PC-9 (cell line): ENCODE measurements at regions of chr12 and their contacts with region 1.

Region 1: GRCh38 chr12:76455582-76456345 is 103.8 kb downstream of the OSBPL8 start:
- DNase-seq: peak; percentile 26 to 91
- H3K4me3 ChIP-seq: no peak overlapping the region
- H3K27ac ChIP-seq: peak overlapping the region; percentile 78
- H3K4me1 ChIP-seq: peaks cover 8% of the 10 kb centered on the region
- H3K27me3 ChIP-seq: no peaks in the 10 kb centered on the region
- CTCF ChIP-seq: peak; percentile 77

Region 2: GRCh38 chr12:75390899-75391538 is 1064.7 kb before region 1 on chr12 and contains the start of gene GLIPR1L2:
- CTCF ChIA-PET with region 1: no interaction called
- POLR2A ChIA-PET with region 1: no interaction called
- intact Hi-C with region 1: loop called (anchors 5 kb)
- DNase-seq: peak; percentile 89 to 95
- H3K4me3 ChIP-seq: peak within 1 kb of the TSS; percentile 69
- H3K27ac ChIP-seq: peak within 1 kb of the TSS; percentile 56
- H3K4me1 ChIP-seq: peaks cover 21% of the 10 kb centered on the region
- H3K27me3 ChIP-seq: no peaks in the 10 kb centered on the region
- CTCF ChIP-seq: peak; percentile 88
- total RNA-seq, gene GLIPR1L2: 0.30 TPM in 1 of 2 replicates, not detected in the other

Region 3: DNA sequence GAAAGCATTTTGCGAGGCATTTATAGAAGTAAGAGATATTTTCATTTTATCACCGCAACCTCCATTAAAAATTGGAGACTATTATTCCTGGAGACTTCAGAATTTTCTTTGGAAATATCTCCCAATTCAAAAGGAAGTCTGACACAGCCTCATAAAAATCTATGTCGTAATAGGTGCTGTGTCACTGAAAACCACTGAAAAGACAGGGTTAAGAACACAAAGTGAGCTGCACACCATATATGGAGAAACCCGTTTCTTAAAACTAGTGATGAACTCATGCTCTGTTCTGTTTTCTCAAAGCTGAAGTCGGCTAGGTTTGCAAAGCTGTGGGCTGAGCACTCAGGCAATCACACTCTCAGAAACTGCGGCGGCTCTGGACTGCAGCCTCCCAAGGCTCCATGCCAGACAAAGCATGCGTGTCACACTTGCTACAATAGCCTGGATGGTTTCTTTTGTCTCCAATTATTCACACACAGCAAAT is 975.3 kb before region 1 on chr12 and contains the start of gene GLIPR1:
- CTCF ChIA-PET with region 1: no interaction called
- POLR2A ChIA-PET with region 1: interaction called, 4 read pairs
- intact Hi-C with region 1: loop called (anchors 1 kb)
- DNase-seq: peak; percentile 46 to 69
- H3K4me3 ChIP-seq: no peak within 1 kb of the TSS
- H3K27ac ChIP-seq: no peak within 1 kb of the TSS
- H3K4me1 ChIP-seq: peaks cover 11% of the 10 kb centered on the region; the same call in 1 of the 2 replicates
- H3K27me3 ChIP-seq: no peaks in the 10 kb centered on the region
- CTCF ChIP-seq: no peak
- total RNA-seq, gene GLIPR1: 6.2 and 14.1 TPM in 2 replicates

Region 4: DNA sequence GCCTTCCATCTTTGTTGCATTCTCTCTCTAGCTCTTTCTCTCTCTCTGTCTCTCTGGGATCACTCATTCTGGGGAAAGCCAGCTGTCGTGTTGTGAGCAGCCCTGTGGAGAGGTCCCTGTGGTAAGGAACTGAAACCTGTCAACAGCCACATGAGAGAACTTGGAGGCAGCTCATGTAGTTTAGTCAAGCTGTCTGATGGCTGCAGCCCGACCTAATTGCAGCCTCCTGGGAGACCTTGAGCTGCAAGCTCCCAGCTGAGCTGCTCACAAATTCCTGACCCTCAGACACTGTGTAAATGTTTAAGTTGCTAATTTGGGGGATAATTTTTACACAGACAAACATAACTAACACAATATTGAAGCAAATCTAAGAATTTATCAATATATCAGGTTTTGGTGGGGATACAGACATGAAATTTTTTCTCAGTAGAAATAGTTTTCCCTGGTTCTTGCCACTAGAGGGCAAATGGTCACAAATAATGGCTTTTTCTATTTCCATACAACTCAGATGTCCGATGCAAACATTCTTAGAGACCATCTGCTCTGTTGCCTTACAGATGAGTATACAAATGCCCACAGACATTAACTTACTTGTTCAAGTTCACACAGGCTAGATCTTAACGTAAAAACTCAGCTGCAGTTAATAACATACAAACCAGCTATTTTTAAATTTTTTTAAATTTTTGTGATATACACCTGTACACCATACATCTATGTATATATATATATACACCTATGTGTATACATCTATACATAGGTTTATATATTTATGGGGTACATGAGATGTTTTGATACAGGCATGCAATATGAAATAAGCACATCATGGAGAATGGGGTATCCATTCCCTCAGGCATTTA is 928.9 kb before region 1 on chr12:
- CTCF ChIA-PET with region 1: no interaction called
- POLR2A ChIA-PET with region 1: no interaction called
- intact Hi-C with region 1: loop called (anchors 1 kb)
- DNase-seq: peak; percentile 3 to 40
- H3K4me3 ChIP-seq: no peak overlapping the region
- H3K27ac ChIP-seq: no peak overlapping the region
- H3K4me1 ChIP-seq: no peaks in the 10 kb centered on the region; the same call in 1 of the 2 replicates
- H3K27me3 ChIP-seq: no peaks in the 10 kb centered on the region
- CTCF ChIP-seq: peak; percentile 82

Region 5: DNA sequence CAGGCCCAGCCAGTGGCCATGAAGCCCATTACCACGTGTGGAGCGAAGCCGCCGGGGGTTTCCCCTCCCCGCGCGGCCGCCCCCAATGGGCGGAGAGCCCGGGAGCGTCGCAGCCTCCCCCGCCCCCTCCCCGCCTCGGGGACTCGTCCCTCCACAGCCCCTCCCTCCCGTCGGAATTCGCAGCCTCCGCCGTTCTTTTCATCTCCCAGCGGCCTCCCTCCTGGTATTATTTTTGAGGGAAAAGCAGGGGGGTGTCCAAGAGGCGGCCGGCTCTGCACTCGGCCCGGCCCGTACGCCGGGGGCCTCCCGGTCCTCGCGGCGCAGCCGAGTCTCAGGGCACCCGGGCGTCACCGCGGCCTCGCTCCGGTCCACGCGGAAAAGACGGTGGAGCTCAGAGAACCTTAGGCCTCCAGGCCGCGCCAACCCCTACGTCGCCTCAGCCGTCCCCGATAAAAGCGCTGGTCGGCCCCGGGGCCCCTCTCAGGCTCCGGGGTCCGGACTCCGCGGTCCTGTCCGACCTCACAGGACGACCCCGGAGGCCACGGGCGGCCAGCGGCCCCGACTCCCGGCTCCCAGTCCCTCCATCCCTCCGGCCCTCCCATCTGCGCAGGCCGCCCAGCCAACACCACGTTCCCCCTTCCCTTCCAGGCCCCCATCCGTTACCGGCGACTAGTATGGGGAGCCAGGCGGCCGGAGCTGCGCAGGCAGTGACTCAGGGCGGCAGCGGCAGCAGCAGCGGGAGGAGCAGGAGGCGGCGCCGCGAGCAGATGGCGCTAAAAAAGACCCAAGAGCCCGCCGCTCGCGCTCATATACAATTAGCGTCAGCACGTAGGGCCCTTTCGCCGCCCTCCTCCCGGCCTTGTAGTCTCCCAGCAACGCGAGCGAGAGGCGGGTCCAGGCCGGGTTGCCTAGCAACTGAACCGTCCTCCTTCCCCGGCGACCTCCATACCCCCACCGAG is 371.6 kb before region 1 on chr12 and contains the start of gene NAP1L1:
- CTCF ChIA-PET with region 1: no interaction called
- POLR2A ChIA-PET with region 1: no interaction called
- intact Hi-C with region 1: loop called (anchors 10 kb)
- DNase-seq: peak; percentile 86 to 95
- H3K4me3 ChIP-seq: peak within 1 kb of the TSS; percentile 98
- H3K27ac ChIP-seq: peak within 1 kb of the TSS; percentile 86
- H3K4me1 ChIP-seq: peaks cover 25% of the 10 kb centered on the region
- H3K27me3 ChIP-seq: no peaks in the 10 kb centered on the region
- CTCF ChIP-seq: no peak
- total RNA-seq, gene NAP1L1: 466 and 587 TPM in 2 replicates

Region 6: GRCh38 chr12:76158518-76159321 is 297.0 kb before region 1 on chr12:
- CTCF ChIA-PET with region 1: interaction called, 4 read pairs
- POLR2A ChIA-PET with region 1: no interaction called
- intact Hi-C with region 1: loop called (anchors 10 kb)
- DNase-seq: peak in 1 of 2 experiments; percentile 53
- H3K4me3 ChIP-seq: no peak overlapping the region
- H3K27ac ChIP-seq: no peak overlapping the region
- H3K4me1 ChIP-seq: no peaks in the 10 kb centered on the region
- H3K27me3 ChIP-seq: no peaks in the 10 kb centered on the region
- CTCF ChIP-seq: peak; percentile 57

Region 7: DNA sequence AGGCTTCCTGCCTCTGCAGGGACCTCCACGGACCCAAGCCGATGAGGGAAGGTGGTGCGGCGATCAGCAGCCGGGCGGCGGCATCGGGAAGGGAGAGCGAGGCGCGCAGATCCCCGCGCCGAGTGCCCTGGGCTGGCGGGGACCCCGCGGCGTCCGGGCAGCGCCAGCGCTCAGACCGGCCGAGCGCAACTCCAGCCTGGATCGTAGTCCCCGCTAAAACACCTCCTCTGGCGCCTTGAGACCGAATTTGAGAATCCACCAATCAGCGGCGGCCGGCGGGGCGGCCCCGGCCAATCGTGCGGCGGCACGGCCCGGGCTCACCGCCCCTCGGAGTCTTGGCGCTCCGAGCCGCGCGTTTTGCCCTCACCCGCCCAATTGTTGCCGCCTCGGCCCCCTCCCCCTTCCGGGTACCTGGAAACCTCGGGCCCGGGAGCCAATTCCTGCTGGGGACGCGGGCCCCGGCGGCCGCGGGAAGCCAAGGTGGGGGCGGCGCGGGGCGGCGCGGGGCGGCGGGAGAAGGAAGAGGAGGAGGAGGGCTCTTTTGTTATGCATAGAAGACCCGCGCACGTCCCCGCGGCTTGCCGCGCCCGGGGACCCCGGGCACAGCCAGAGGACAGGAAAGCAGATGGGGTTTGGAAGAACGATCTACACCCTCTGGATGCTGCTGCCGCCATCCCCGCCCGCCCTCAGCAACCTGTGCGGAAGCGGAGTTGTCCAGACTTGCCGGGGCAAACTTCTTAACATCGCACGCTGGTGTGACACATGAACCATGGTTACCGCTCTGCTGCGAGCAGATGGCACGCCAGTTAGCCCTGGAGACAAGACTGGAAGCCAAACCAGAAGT is 609.8 kb after region 1 on chr12 and contains the start of gene E2F7:
- CTCF ChIA-PET with region 1: no interaction called
- POLR2A ChIA-PET with region 1: no interaction called
- intact Hi-C with region 1: no loop called
- DNase-seq: peak; percentile 80 to 95
- H3K4me3 ChIP-seq: peak within 1 kb of the TSS; percentile 93
- H3K27ac ChIP-seq: peak within 1 kb of the TSS; percentile 27; the same call in 1 of the 2 replicates
- H3K4me1 ChIP-seq: peaks cover 19% of the 10 kb centered on the region
- H3K27me3 ChIP-seq: no peaks in the 10 kb centered on the region
- CTCF ChIP-seq: no peak
- total RNA-seq, gene E2F7: 9.8 and 14.6 TPM in 2 replicates